Calu3 (cell line): ENCODE measurements at regions of chr4 and their contacts with region 1.

Region 1: GRCh38 chr4:145609481-145610427 is 9.4 kb upstream of the MMAA start:
- DNase-seq: peak; percentile 63
- H3K4me3 Mint-ChIP-seq: no peak overlapping the region
- H3K27ac Mint-ChIP-seq: no peak overlapping the region
- H3K4me1 Mint-ChIP-seq: peaks cover 21% of the 10 kb centered on the region
- H3K27me3 Mint-ChIP-seq: no peaks in the 10 kb centered on the region
- CTCF ChIP-seq: peak; percentile 39

Region 2: GRCh38 chr4:145216535-145216934 is 393.2 kb before region 1 on chr4:
- CTCF ChIA-PET with region 1: interaction called, 6 read pairs
- intact Hi-C with region 1: loop called (anchors 1 kb)
- DNase-seq: no peak
- H3K4me3 Mint-ChIP-seq: no peak overlapping the region
- H3K27ac Mint-ChIP-seq: no peak overlapping the region
- H3K4me1 Mint-ChIP-seq: no peaks in the 10 kb centered on the region
- H3K27me3 Mint-ChIP-seq: no peaks in the 10 kb centered on the region
- CTCF ChIP-seq: peak; percentile 32

Region 3: DNA sequence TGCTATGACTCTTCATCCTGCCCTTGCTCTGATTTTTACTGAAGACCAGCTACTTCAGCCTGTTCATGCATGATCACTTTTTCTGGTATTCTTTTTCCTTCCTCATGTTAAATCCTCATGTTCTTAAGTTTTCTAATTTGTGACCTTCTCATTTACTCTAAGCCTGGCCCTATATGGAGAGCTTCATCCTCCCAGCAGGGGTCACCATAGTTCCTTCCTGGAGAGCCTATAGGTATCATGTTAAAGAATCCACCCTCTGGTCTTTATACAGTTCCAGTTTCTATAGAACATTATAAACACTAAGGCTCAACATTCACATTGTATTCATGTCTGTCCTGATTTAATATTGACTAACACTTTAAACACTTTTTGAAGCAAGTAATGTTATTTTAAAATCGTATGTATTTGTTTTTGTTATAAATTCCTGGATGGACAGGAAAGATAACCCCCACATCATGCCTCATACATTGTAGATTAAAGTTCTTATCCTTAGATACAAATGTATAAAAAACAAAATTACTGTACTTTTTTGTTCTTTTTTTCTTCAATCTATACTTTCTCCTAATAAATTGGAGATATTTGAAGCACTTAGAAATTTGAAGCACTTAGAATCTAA is 375.6 kb before region 1 on chr4:
- CTCF ChIA-PET with region 1: interaction called, 9 read pairs
- intact Hi-C with region 1: loop called (anchors 1 kb)
- DNase-seq: peak; percentile 69
- H3K4me3 Mint-ChIP-seq: no peak overlapping the region
- H3K27ac Mint-ChIP-seq: no peak overlapping the region
- H3K4me1 Mint-ChIP-seq: no peaks in the 10 kb centered on the region
- H3K27me3 Mint-ChIP-seq: no peaks in the 10 kb centered on the region
- CTCF ChIP-seq: peak; percentile 47